ENCODE measurements at regions of chr10 and their contacts with region 1.

Region 1: DNA sequence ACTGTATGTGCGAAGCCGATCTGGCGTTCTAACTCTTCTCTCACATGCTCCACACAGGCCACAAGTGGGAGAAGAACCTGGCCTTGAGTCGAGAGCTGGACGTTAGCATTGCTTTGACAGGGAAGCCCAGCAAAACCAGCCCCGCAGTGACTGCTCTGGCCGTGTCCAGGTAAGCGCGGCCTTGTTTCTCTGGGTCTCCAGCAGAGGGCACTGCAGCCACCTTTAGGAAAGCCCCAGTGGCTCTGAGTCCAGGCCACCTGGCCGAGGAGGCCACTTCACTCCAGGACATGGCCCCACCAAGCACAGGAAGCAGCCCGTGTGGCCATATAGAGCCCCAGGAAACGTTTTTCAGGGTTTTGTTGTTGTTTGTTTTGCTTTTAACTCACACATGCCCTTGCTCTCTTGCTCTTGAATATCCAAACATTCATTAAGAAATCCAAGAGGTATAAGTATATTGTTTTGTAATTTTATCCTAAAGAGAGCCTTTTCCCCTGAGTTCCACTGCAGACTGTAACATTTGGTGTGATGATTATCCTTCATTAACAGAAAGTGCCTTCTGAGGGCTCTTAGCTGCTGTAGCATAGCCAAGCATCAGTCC is 41.8 kb upstream of the LRRC18 start:
- DNase-seq: peak; percentile 54
- ATAC-seq: peak; percentile 52
- H3K4me3 ChIP-seq: no peak overlapping the region
- H3K4me3 Mint-ChIP-seq: no peak overlapping the region
- H3K27ac ChIP-seq: peak overlapping the region in 1 of 2 donors; percentile 23
- H3K27ac Mint-ChIP-seq: no peak overlapping the region
- H3K4me1 ChIP-seq: no peaks in the 10 kb centered on the region
- H3K4me1 Mint-ChIP-seq: peaks cover 1% of the 10 kb centered on the region
- H3K27me3 ChIP-seq: no peaks in the 10 kb centered on the region
- H3K27me3 Mint-ChIP-seq: no peaks in the 10 kb centered on the region
- CTCF ChIP-seq: peak; percentile 88

Region 2: GRCh38 chr10:48958598-48959190 is 22.7 kb before region 1 on chr10:
- CTCF ChIA-PET with region 1: no interaction called
- POLR2A ChIA-PET with region 1: no interaction called
- intact Hi-C with region 1: no loop called
- DNase-seq: no peak
- ATAC-seq: no peak
- H3K4me3 ChIP-seq: no peak overlapping the region
- H3K4me3 Mint-ChIP-seq: no peak overlapping the region
- H3K27ac ChIP-seq: no peak overlapping the region
- H3K27ac Mint-ChIP-seq: no peak overlapping the region
- H3K4me1 ChIP-seq: no peaks in the 10 kb centered on the region
- H3K4me1 Mint-ChIP-seq: no peaks in the 10 kb centered on the region
- H3K27me3 ChIP-seq: no peaks in the 10 kb centered on the region
- H3K27me3 Mint-ChIP-seq: no peaks in the 10 kb centered on the region
- CTCF ChIP-seq: no peak

Region 3: DNA sequence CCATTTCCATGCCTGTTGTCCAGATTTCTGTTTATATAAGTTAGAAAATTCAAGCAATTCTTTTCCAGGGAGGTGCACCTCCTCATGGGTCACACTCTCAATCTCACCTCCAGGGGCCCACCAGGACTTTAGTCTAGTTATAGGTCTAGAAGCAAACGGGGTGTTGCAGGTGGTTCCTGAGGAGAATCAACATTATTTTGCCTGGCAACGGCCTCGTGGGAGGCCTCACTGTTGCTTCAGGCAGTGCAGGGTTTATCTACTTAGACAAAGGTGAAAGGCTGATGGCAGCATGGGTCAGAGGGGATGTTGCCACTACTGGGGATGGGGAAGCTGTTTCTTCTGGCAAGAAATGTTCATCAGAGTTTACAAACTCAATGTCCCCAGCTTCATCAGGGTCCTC is 14.9 kb after region 1 on chr10:
- CTCF ChIA-PET with region 1: no interaction called
- POLR2A ChIA-PET with region 1: no interaction called
- intact Hi-C with region 1: no loop called
- DNase-seq: no peak
- ATAC-seq: no peak
- H3K4me3 ChIP-seq: no peak overlapping the region
- H3K4me3 Mint-ChIP-seq: no peak overlapping the region
- H3K27ac ChIP-seq: no peak overlapping the region
- H3K27ac Mint-ChIP-seq: no peak overlapping the region
- H3K4me1 ChIP-seq: no peaks in the 10 kb centered on the region
- H3K4me1 Mint-ChIP-seq: no peaks in the 10 kb centered on the region
- H3K27me3 ChIP-seq: peaks cover 0 to 2% (median 0%) of the 10 kb centered on the region in 4 experiments
- H3K27me3 Mint-ChIP-seq: peaks cover 3% of the 10 kb centered on the region
- CTCF ChIP-seq: no peak

Region 4: GRCh38 chr10:49076741-49077521 is 95.5 kb after region 1 on chr10:
- CTCF ChIA-PET with region 1: no interaction called
- POLR2A ChIA-PET with region 1: no interaction called
- intact Hi-C with region 1: no loop called
- DNase-seq: no peak
- ATAC-seq: no peak
- H3K4me3 ChIP-seq: no peak overlapping the region
- H3K4me3 Mint-ChIP-seq: no peak overlapping the region
- H3K27ac ChIP-seq: no peak overlapping the region
- H3K27ac Mint-ChIP-seq: no peak overlapping the region
- H3K4me1 ChIP-seq: no peaks in the 10 kb centered on the region
- H3K4me1 Mint-ChIP-seq: no peaks in the 10 kb centered on the region
- H3K27me3 ChIP-seq: peaks cover 0 to 4% (median 1%) of the 10 kb centered on the region in 4 experiments
- H3K27me3 Mint-ChIP-seq: peaks cover 29% of the 10 kb centered on the region
- CTCF ChIP-seq: no peak

Region 5: DNA sequence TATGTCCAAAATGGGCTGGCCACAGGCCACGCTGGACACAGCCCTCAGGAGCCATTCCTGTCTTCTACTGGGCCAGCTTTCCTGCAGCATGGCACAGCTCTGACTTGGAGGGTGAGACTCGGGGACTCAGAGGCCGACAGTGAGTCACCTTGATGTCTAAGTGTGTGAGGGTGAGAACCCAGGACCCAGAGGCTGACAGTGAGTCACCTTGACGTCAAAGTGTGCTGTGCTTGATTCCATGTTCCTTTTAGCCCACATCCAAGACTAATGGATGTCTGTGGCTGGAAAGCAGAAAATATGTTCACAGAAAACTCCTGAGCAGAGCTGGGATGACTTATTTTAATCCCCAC is 158.4 kb after region 1 on chr10:
- CTCF ChIA-PET with region 1: no interaction called
- POLR2A ChIA-PET with region 1: no interaction called
- intact Hi-C with region 1: no loop called
- DNase-seq: no peak
- ATAC-seq: no peak
- H3K4me3 ChIP-seq: no peak overlapping the region
- H3K4me3 Mint-ChIP-seq: no peak overlapping the region
- H3K27ac ChIP-seq: no peak overlapping the region
- H3K27ac Mint-ChIP-seq: no peak overlapping the region
- H3K4me1 ChIP-seq: peaks cover 17 to 19% of the 10 kb centered on the region in 2 donors
- H3K4me1 Mint-ChIP-seq: peaks cover 15% of the 10 kb centered on the region
- H3K27me3 ChIP-seq: no peaks in the 10 kb centered on the region
- H3K27me3 Mint-ChIP-seq: peaks cover 3% of the 10 kb centered on the region
- CTCF ChIP-seq: no peak

Region 6: DNA sequence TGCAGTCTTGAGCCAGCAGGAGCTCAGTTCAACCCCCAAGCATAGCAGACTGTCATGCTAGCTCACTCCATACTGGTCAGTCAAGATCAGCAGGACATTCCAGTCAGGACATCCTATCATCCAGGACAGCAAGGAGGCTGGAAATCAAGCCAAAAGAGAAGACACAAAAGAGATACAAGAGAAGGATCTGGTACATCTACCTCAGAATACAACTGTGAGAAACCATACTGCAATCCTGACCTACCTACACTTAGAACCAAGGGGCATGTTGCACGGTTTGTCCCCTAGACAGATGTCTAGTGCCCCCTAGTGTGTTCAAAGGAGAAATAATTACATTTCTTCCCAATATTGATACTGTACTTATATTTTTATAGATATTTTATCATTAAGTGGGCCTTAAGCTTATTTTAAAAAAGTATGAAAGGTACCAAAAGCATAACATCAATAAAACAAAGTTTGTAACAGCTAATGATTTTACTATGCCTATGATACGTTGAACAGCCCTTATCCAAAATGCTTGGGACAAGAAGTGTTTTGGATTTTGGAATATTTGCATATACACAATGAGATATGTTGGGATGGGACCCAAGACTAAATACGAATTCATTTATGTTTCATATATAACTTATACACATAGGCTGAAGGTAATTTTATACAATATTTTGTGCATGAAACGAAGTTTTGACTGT is 530.9 kb after region 1 on chr10:
- CTCF ChIA-PET with region 1: interaction called, 8 read pairs
- POLR2A ChIA-PET with region 1: no interaction called
- intact Hi-C with region 1: loop called (anchors 1 kb)
- DNase-seq: peak; percentile 40
- ATAC-seq: no peak
- H3K4me3 ChIP-seq: no peak overlapping the region
- H3K4me3 Mint-ChIP-seq: no peak overlapping the region
- H3K27ac ChIP-seq: no peak overlapping the region
- H3K27ac Mint-ChIP-seq: no peak overlapping the region
- H3K4me1 ChIP-seq: peaks cover 11 to 13% of the 10 kb centered on the region in 2 donors
- H3K4me1 Mint-ChIP-seq: peaks cover 15% of the 10 kb centered on the region
- H3K27me3 ChIP-seq: no peaks in the 10 kb centered on the region
- H3K27me3 Mint-ChIP-seq: no peaks in the 10 kb centered on the region
- CTCF ChIP-seq: peak; percentile 78

Region 7: DNA sequence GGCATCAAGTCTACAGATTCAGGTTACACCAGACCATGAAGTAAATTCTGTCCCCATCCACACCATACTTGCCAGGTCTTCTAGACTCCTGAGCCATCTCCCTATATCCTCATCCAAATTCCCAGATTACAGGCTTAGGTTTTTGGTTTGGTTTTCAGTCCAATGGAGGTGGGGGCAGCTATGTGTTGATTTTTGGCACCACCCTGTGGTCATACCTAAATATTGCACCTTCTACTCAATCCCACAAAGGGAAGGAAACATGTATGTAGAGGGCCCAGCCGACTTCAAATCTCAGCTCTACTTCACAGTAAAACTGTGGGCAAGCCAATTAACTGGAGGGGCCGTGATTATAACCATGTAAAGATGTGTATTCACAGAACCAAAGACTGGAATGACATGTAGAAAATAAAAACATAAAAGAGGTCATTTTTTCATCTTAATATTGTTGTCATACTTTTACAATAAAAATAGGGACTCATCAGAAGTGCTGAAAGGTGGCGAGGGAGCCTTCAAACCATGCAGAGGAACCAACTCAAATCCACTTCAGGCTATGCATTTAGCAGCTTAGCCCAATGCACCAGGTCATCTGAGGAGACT is 537.7 kb after region 1 on chr10:
- CTCF ChIA-PET with region 1: interaction called, 4 read pairs
- POLR2A ChIA-PET with region 1: no interaction called
- intact Hi-C with region 1: loop called (anchors 1 kb)
- DNase-seq: peak; percentile 56
- ATAC-seq: peak; percentile 81
- H3K4me3 ChIP-seq: no peak overlapping the region
- H3K4me3 Mint-ChIP-seq: no peak overlapping the region
- H3K27ac ChIP-seq: no peak overlapping the region
- H3K27ac Mint-ChIP-seq: no peak overlapping the region
- H3K4me1 ChIP-seq: no peaks in the 10 kb centered on the region
- H3K4me1 Mint-ChIP-seq: peaks cover 8% of the 10 kb centered on the region
- H3K27me3 ChIP-seq: no peaks in the 10 kb centered on the region
- H3K27me3 Mint-ChIP-seq: no peaks in the 10 kb centered on the region
- CTCF ChIP-seq: peak; percentile 82

Measured in B cell (primary cell).